Activated CD4-positive, alpha-beta memory T cell treated with anti-CD3 and anti-CD28 coated beads for 36 hours (primary cell): ENCODE measurements at regions of chr9 and their contacts with region 1.

Region 1: DNA sequence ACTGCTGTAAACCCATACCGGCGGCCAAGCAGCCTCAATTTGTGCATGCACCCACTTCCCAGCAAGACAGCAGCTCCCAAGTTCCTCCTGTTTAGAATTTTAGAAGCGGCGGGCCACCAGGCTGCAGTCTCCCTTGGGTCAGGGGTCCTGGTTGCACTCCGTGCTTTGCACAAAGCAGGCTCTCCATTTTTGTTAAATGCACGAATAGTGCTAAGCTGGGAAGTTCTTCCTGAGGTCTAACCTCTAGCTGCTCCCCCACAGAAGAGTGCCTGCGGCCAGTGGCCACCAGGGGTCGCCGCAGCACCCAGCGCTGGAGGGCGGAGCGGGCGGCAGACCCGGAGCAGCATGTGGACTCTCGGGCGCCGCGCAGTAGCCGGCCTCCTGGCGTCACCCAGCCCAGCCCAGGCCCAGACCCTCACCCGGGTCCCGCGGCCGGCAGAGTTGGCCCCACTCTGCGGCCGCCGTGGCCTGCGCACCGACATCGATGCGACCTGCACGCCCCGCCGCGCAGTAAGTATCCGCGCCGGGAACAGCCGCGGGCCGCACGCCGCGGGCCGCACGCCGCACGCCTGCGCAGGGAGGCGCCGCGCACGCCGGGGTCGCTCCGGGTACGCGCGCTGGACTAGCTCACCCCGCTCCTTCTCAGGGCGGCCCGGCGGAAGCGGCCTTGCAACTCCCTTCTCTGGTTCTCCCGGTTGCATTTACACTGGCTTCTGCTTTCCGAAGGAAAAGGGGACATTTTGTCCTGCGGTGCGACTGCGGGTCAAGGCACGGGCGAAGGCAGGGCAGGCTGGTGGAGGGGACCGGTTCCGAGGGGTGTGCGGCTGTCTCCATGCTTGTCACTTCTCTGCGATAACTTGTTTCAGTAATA is at the start of gene FXN:
- DNase-seq: peak; percentile 89
- H3K4me3 Mint-ChIP-seq: peak within 1 kb of the TSS; percentile 97
- H3K27ac Mint-ChIP-seq: peak within 1 kb of the TSS; percentile 92
- H3K4me1 Mint-ChIP-seq: peaks cover 21% of the 10 kb centered on the region
- H3K27me3 Mint-ChIP-seq: no peaks in the 10 kb centered on the region
- total RNA-seq, gene FXN: 14.1 to 15.2 TPM

Region 2: DNA sequence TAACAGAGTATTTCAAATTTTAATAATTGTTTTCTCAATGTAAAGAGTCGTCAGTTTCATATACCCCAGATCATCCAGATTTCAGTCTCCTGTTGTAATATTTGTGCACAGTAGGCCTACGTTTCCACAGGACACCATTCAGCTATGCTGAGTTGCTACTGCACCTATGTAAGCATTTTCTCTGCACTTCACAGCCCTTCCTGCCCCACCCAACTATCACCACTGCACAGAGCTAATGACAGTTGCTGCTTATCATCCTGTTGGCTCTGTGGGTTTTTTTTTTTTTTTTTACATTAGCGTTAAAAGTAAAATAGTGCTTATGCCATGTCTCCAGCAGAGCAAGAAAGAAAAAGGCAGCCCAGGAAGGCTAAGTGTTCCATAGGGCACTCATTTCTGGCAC is 15.9 kb before region 1 on chr9:
- CTCF ChIA-PET with region 1: interaction called, 11 read pairs
- POLR2A ChIA-PET with region 1: no interaction called
- intact Hi-C with region 1: no loop called
- DNase-seq: peak; percentile 21
- H3K4me3 Mint-ChIP-seq: no peak overlapping the region
- H3K27ac Mint-ChIP-seq: no peak overlapping the region
- H3K4me1 Mint-ChIP-seq: peaks cover 17% of the 10 kb centered on the region
- H3K27me3 Mint-ChIP-seq: no peaks in the 10 kb centered on the region

Region 3: DNA sequence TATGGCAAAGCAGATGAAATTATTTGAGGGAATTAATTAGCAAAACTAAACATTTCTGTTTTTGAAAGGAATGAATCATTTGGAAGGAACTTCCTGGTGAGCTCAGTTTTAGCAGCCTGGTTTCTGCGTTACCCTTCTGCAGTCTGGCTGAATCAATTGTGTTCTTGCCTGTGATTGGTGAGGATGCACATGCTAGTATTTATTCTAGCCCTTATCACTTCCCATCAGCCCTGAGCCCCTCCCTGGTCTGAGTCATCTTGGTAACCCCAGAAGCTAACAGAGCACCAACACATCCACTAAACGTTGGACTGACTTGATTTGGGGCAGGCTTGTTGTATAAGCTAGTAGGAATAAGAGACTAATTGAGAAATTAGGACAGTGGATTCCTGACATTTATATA is 145.0 kb after region 1 on chr9:
- CTCF ChIA-PET with region 1: interaction called, 8 read pairs
- POLR2A ChIA-PET with region 1: interaction called, 3 read pairs
- intact Hi-C with region 1: loop called (anchors 1 kb)
- DNase-seq: peak; percentile 79
- H3K4me3 Mint-ChIP-seq: no peak overlapping the region
- H3K27ac Mint-ChIP-seq: peak overlapping the region; percentile 23
- H3K4me1 Mint-ChIP-seq: peaks cover 51% of the 10 kb centered on the region
- H3K27me3 Mint-ChIP-seq: peaks cover 5% of the 10 kb centered on the region

Region 4: GRCh38 chr9:69549310-69550202 is 513.9 kb after region 1 on chr9:
- CTCF ChIA-PET with region 1: no interaction called
- POLR2A ChIA-PET with region 1: no interaction called
- intact Hi-C with region 1: loop called (anchors 5 kb)
- DNase-seq: peak; percentile 22
- H3K4me3 Mint-ChIP-seq: no peak overlapping the region
- H3K27ac Mint-ChIP-seq: no peak overlapping the region
- H3K4me1 Mint-ChIP-seq: peaks cover 4% of the 10 kb centered on the region
- H3K27me3 Mint-ChIP-seq: peaks cover 14% of the 10 kb centered on the region